Adrenal gland (tissue), 19 donors: ENCODE measurements at regions of chr20 and their contacts with region 1.

Region 1: GRCh38 chr20:37192137-37192854 is 12.9 kb upstream of the MROH8 start:
- DNase-seq: peak; percentile 87 to 96 (median 91)
- H3K4me3 ChIP-seq: no peak overlapping the region
- H3K27ac ChIP-seq: no peak overlapping the region
- H3K4me1 ChIP-seq: peaks cover 0 to 31% of the 10 kb centered on the region in 2 donors
- H3K27me3 ChIP-seq: no peaks in the 10 kb centered on the region
- CTCF ChIP-seq: peak; percentile 82 to 94 (median 83)
- POLR2A ChIP-seq: no peak

Region 2: GRCh38 chr20:37327748-37328147 is 135.5 kb after region 1 on chr20:
- intact Hi-C with region 1: no loop called
- DNase-seq: peak in 4 of 7 donors; percentile 67 to 85 (median 77)
- H3K4me3 ChIP-seq: no peak overlapping the region
- H3K27ac ChIP-seq: peak overlapping the region in 1 of 5 donors; percentile 50
- H3K4me1 ChIP-seq: no peaks in the 10 kb centered on the region
- H3K27me3 ChIP-seq: no peaks in the 10 kb centered on the region
- CTCF ChIP-seq: no peak
- POLR2A ChIP-seq: no peak

Region 3: GRCh38 chr20:37384683-37385174 is 192.4 kb after region 1 on chr20:
- intact Hi-C with region 1: loop called in 1 of 2 experiments (anchors 10 kb)
- DNase-seq: peak; percentile 77 to 86 (median 80)
- H3K4me3 ChIP-seq: peak overlapping the region in 2 of 4 donors; percentile 32 to 68
- H3K27ac ChIP-seq: peak overlapping the region in 3 of 5 donors; percentile 67 to 87 (median 87)
- H3K4me1 ChIP-seq: peaks cover 13 to 49% of the 10 kb centered on the region in 2 donors
- H3K27me3 ChIP-seq: no peaks in the 10 kb centered on the region
- CTCF ChIP-seq: peak; percentile 74 to 98 (median 91)
- POLR2A ChIP-seq: no peak

Region 4: DNA sequence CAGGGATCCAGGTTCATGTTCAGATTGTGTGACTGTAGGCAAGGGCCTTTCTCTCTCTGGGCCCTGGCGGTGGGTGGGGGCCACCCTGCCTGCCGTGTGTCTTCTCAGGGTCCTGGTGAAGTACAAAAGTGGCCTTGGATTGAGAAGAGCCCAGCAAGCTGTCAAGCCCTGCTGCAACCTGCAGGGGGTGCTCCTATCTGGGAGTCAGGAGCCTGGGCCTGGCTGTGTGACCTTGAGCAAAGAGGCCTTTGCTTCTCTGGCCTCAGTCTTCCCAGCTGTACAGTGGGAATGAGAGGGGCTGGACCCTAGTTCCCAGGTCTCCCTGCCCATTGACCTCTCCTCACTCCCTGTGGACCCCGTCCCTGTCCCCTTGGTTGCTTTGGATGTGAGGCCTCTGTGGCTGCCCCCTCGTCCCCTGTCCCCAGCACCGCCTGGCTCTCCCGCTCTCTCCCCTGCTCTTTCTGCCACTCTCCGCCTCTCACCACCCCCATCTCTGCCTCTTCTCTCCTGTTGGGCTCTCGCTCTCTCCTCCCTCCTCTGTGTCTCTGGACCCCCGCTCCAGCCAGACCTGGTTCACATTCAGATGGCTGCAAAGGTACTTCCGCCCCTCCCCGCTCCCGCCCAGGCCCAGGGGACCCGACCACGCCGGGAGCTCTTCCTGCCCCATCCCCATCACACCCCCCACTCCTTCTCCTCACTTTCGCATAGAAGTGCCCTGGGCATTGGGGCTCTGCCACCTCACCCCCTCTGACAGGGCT is 200.3 kb after region 1 on chr20:
- intact Hi-C with region 1: loop called (anchors 10 kb)
- DNase-seq: no peak
- H3K4me3 ChIP-seq: no peak overlapping the region
- H3K27ac ChIP-seq: peak overlapping the region in 1 of 5 donors; percentile 3
- H3K4me1 ChIP-seq: peaks cover 6 to 7% of the 10 kb centered on the region in 2 donors
- H3K27me3 ChIP-seq: no peaks in the 10 kb centered on the region
- CTCF ChIP-seq: peak in 5 of 6 experiments; percentile 11 to 27 (median 16)
- POLR2A ChIP-seq: no peak

Region 5: DNA sequence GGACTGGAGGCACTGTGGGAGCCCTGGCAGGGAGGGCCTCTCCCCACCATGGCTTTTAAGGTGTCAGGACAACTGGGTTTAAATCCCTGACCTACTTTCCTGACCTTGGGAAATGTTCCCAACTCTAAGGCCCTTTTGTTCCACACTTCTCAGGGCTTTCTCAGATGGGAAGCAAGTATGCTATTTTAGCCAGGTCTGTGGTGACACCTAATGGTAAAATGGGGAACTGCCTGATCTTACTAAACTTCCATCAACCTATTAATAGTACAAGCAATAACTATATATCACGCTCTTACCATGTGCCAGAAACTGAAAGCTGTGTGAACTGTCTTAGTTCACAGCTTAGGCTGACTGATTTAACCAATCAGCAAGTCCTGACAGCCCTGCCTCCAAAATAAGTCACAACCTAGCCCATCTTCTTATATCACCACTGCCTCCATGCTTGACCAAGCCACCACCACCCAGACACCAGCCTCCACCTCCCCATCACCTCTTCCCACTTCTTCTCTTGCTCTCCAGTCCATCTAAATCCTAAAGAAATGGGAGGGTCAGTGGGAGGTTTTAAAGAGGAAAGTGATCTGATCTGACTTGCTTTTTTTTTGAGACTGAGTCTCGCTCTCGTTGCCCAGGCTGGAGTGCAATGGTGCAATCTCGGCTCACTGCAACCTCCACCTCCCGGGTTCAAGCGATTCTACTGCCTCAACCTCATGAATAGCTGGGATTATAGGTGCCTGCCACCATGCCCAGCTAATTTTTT is 342.3 kb after region 1 on chr20:
- intact Hi-C with region 1: loop called (anchors 5 kb)
- DNase-seq: peak in 6 of 7 donors; percentile 52 to 82 (median 70)
- H3K4me3 ChIP-seq: no peak overlapping the region
- H3K27ac ChIP-seq: no peak overlapping the region
- H3K4me1 ChIP-seq: no peaks in the 10 kb centered on the region
- H3K27me3 ChIP-seq: no peaks in the 10 kb centered on the region
- CTCF ChIP-seq: peak; percentile 65 to 97 (median 90)
- POLR2A ChIP-seq: no peak